HEK293T (cell line): ENCODE measurements at regions of chr1 and their contacts with region 1.

Region 1: GRCh38 chr1:32013386-32014198 is at the start of gene KHDRBS1:
- DNase-seq: peak; percentile 100

Region 2: GRCh38 chr1:31995263-31995662 is 18.3 kb before region 1 on chr1:
- CTCF ChIA-PET with region 1: no interaction called
- POLR2A ChIA-PET with region 1: interaction called, 10 read pairs
- DNase-seq: no peak

Region 3: DNA sequence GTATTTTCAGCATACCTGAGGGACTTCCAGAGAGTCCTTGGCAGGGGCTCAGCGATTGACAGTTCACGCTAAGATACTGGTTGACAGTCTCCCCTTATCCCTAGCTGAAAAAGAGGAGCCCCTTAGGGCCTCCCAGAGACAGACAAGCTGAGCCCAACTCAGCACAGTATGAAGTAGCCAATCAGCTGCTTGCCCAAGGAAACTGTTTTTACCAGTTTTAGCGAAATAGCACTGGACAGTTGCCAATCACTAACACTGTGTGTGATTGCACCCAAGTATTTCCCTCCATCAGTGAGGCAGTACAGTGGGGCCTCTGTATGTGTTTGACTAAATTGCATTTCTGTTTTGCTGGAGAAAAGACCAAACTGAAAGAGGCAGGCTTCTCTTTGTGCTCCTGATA is 27.1 kb after region 1 on chr1:
- CTCF ChIA-PET with region 1: no interaction called
- POLR2A ChIA-PET with region 1: interaction called, 11 read pairs
- DNase-seq: no peak

Region 4: DNA sequence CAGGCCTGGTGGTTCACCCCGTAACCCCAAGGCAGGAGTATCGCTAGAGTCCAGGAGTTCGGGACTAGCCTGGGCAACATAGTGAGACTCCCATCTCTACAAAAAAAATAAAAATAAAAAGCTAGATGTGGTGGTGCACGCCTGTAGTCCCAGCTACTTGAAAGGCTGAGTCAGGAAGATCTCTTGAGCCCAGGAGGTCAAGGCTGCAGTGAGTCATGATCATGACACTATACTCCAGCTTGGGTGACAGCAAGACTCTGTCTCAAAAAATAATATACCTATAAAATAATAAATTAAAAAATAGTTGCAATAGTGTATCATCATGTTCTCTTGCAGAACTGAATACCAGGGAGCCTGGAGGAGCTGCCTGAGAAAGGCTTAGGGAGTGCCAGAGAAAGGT is 39.3 kb after region 1 on chr1:
- CTCF ChIA-PET with region 1: no interaction called
- POLR2A ChIA-PET with region 1: interaction called, 10 read pairs
- DNase-seq: no peak